SK-N-SH (cell line): ENCODE measurements at regions of chr21 and their contacts with region 1.

Region 1: GRCh38 chr21:42309753-42310221 is 5.4 kb downstream of the TFF3 start:
- DNase-seq: peak; percentile 87
- H3K4me3 ChIP-seq: no peak overlapping the region
- H3K27ac ChIP-seq: no peak overlapping the region
- H3K4me1 ChIP-seq: peaks cover 0 to 7% of the 10 kb centered on the region in 2 experiments; a peak in 1 of 4 replicates
- H3K27me3 ChIP-seq: no peaks in the 10 kb centered on the region
- CTCF ChIP-seq: peak; percentile 62
- EP300 ChIP-seq: no peak
- RAD21 ChIP-seq: peak; percentile 64

Region 2: DNA sequence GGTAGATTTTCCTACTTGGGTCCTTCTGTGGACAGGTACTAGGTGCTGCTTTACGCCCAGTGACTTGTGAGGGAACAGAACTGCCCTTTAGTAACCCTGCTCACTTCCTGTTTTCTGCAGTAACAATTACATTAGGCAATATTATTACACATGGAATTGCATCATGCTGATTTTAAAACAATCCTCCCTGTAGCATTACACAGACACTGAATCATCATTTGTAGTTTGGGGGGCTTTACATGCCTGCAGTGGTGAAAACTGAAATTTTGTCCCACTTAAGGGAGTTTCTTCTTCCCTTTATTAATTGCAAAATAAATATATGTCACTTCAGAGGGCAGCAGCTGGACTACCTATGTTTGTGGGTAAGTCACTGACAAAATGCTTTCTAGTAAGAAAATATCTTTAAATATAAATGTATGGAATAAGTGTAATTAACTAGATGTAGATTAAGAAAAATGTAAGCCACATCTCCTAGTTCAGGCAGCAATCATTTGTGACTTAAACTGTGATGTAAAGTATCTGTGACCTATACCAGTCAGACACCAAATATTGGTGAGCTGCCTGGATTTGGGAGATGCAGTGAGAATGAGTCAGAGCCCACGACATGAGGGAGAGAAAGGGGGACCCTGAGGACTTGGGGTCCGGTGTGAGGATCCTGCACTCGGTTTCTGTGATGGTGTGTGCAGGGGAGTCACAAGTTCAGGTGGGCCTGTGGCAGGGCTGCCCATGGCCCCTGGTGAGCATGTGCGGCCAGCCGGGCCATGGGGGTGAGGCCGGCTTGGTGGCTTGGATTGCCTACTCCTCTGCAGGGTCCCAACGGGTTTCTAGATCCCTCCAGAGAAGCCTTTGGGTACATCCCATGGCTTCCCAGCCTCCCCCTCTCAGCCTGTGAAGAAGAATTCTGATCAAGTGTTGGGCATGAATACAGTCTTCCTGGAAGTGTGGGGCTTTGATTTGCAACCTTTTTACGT is 110.0 kb before region 1 on chr21:
- CTCF ChIA-PET with region 1: no interaction called
- POLR2A ChIA-PET with region 1: no interaction called
- DNase-seq: no peak
- H3K4me3 ChIP-seq: no peak overlapping the region
- H3K27ac ChIP-seq: peak overlapping the region in 1 of 2 experiments; percentile 53; a peak in 1 of 4 replicates
- H3K4me1 ChIP-seq: peaks cover 0 to 6% of the 10 kb centered on the region in 2 experiments; a peak in 2 of 4 replicates
- H3K27me3 ChIP-seq: no peaks in the 10 kb centered on the region
- CTCF ChIP-seq: no peak
- EP300 ChIP-seq: no peak
- RAD21 ChIP-seq: no peak

Region 3: DNA sequence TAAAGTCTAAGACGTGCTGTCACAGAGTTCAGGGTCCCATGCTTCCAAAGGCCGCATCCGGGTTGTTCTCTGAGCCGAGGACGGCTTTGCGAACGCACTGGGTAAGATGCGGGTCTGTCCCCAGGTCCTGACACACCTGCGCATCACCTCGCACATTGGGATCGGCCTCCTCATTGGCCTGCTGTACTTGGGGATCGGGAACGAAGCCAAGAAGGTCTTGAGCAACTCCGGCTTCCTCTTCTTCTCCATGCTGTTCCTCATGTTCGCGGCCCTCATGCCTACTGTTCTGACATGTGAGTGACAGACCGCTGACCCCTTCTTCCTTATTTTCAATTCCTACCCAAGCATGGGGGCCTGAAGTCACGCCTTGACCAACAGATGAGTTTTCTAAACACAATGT is 19.9 kb before region 1 on chr21:
- CTCF ChIA-PET with region 1: interaction called, 10 read pairs
- POLR2A ChIA-PET with region 1: no interaction called
- DNase-seq: no peak
- H3K4me3 ChIP-seq: no peak overlapping the region
- H3K27ac ChIP-seq: no peak overlapping the region
- H3K4me1 ChIP-seq: no peaks in the 10 kb centered on the region
- H3K27me3 ChIP-seq: no peaks in the 10 kb centered on the region
- CTCF ChIP-seq: no peak
- EP300 ChIP-seq: no peak
- RAD21 ChIP-seq: no peak

Region 4: GRCh38 chr21:42330380-42331359 is 20.9 kb after region 1 on chr21:
- CTCF ChIA-PET with region 1: interaction called, 10 read pairs
- POLR2A ChIA-PET with region 1: no interaction called
- DNase-seq: no peak
- H3K4me3 ChIP-seq: no peak overlapping the region
- H3K27ac ChIP-seq: no peak overlapping the region
- H3K4me1 ChIP-seq: no peaks in the 10 kb centered on the region
- H3K27me3 ChIP-seq: no peaks in the 10 kb centered on the region
- CTCF ChIP-seq: no peak
- EP300 ChIP-seq: no peak
- RAD21 ChIP-seq: no peak

Region 5: DNA sequence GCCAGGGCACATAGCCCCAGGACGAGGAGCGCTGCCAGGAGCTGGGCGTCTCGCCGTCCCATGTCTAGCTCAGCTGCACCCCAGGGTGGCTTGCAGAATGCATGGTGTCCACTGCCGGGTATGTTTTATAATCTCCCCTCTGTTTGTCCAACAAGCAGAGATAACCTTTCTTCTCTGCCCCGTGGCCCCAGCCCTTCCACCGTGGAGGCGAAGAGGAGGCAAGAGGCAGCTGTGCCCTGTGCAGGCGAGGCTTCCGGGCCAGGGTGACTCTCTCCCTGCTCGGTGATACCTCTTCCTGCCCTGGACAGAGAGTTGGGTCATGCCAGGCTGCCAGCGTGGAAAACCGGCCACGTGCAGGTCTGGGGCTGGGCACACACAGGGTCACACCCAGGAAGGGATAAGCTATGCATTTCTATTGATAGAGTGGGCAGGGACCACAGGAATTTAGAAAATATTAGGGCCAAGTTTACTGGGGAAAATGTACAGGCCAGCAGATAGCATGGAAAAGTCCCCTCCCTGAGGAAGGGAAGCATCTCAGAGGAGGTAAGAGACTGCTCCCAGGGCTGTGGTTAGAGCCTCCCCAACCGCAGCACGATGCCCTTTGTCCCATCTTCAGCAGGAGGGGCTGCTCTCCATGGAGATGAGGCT is 41.2 kb after region 1 on chr21 and contains the start of gene TFF2:
- CTCF ChIA-PET with region 1: no interaction called
- POLR2A ChIA-PET with region 1: no interaction called
- DNase-seq: no peak
- H3K4me3 ChIP-seq: no peak within 1 kb of the TSS
- H3K27ac ChIP-seq: no peak within 1 kb of the TSS
- H3K4me1 ChIP-seq: no peaks in the 10 kb centered on the region
- H3K27me3 ChIP-seq: no peaks in the 10 kb centered on the region
- CTCF ChIP-seq: no peak
- EP300 ChIP-seq: no peak
- RAD21 ChIP-seq: no peak
- polyA plus RNA-seq, gene TFF2: not detected in 2 replicates

Region 6: GRCh38 chr21:42467140-42467983 is 157.6 kb after region 1 on chr21:
- CTCF ChIA-PET with region 1: no interaction called
- POLR2A ChIA-PET with region 1: no interaction called
- DNase-seq: no peak
- H3K4me3 ChIP-seq: no peak overlapping the region
- H3K27ac ChIP-seq: no peak overlapping the region
- H3K4me1 ChIP-seq: no peaks in the 10 kb centered on the region; a peak in 2 of 4 replicates
- H3K27me3 ChIP-seq: no peaks in the 10 kb centered on the region
- CTCF ChIP-seq: no peak
- EP300 ChIP-seq: no peak
- RAD21 ChIP-seq: no peak